ENCODE measurements at regions of chr5 and their contacts with region 1.

Region 1: GRCh38 chr5:42583322-42583721 is 160.1 kb downstream of the GHR start:
- DNase-seq: no peak
- H3K4me3 ChIP-seq: no peak overlapping the region
- H3K27me3 ChIP-seq: no peaks in the 10 kb centered on the region
- CTCF ChIP-seq: peak; percentile 83

Region 2: DNA sequence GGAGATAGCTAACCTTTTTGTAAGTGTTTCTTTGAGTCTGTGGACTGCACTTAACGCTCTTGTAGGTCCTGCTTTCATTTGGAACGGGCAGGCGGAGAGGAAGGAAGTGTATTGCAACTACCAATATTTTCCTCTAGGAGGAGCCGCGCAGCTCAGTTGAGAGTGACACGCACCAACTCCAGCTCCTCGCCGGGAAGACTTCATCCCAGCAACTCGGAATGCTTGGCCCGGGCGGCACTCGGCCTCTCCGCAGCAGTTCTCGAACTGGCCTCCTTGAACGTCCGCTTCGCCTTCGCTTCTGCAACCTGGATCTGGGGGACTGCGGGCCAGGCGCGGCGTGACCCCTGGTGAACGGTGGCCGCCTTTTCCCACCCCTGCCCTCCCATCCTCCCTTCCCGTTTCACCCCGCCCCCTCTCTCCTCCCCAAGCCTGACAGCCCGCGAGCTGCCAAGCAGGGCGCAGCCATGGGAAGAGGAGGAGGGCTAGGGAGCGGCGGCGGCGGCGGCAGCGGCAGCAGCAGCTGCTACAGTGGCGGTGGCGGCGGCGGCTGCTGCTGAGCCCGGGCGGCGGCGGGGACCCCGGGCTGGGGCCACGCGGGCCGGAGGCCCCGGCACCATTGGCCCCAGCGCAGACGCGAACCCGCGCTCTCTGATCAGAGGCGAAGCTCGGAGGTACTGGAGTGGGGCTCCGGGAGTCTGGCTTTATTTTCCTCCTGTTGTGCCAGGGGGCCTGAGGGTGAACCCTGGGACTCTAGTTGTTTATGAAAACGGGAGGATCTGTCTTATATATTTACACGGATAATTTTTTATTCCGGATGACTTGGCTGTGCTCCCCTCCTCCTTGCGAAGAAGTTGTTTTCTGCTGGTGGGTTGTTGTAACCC is 159.8 kb before region 1 on chr5 and contains the start of gene GHR:
- CTCF ChIA-PET with region 1: interaction called, 15 read pairs
- POLR2A ChIA-PET with region 1: no interaction called
- DNase-seq: peak; percentile 43
- H3K4me3 ChIP-seq: peak within 1 kb of the TSS; percentile 66
- H3K27me3 ChIP-seq: peaks cover 3% of the 10 kb centered on the region
- CTCF ChIP-seq: peak; percentile 84
- polyA plus RNA-seq, gene GHR: 0.90 and 1.6 TPM in 2 replicates

Region 3: GRCh38 chr5:42570966-42571960 is 12.1 kb before region 1 on chr5:
- CTCF ChIA-PET with region 1: interaction called, 36 read pairs
- POLR2A ChIA-PET with region 1: no interaction called
- DNase-seq: no peak
- H3K4me3 ChIP-seq: no peak overlapping the region
- H3K27me3 ChIP-seq: no peaks in the 10 kb centered on the region
- CTCF ChIP-seq: no peak

Region 4: GRCh38 chr5:42595597-42595996 is 12.3 kb after region 1 on chr5:
- CTCF ChIA-PET with region 1: interaction called, 12 read pairs
- POLR2A ChIA-PET with region 1: no interaction called
- DNase-seq: no peak
- H3K4me3 ChIP-seq: no peak overlapping the region
- H3K27me3 ChIP-seq: no peaks in the 10 kb centered on the region
- CTCF ChIP-seq: no peak

Measured in BJ (cell line).